Mammary epithelial cell (primary cell): ENCODE measurements at regions of chr19 and their contacts with region 1.

Region 1: GRCh38 chr19:19115954-19116353 is 22.3 kb downstream of the TMEM161A start:
- DNase-seq: no peak
- H3K4me3 ChIP-seq: no peak overlapping the region
- H3K27ac ChIP-seq: no peak overlapping the region
- H3K4me1 ChIP-seq: no peaks in the 10 kb centered on the region
- H3K27me3 ChIP-seq: peaks cover 2% of the 10 kb centered on the region
- CTCF ChIP-seq: peak; percentile 36 to 52

Region 2: DNA sequence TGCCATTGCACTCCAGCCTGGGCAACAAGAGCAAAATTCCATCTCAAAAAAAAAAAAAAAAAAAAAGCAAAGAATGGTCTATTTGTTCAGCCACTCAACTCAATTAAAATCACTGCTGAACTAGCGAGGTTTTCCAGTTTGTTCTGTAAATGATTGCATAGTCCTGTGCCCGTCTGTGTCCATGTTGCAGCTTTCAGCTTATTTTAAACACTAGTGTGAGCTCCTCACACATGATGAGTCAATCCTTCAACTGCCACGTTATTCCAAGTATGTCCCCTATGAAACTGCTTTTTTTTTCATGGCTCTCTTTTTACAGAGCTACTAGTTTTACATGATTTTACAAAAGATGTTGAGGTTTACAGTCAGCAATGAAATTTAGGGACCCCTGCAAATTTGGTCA is 94.8 kb before region 1 on chr19:
- CTCF ChIA-PET with region 1: interaction called, 11 read pairs
- dilution Hi-C with region 1: no loop called
- in situ Hi-C with region 1: no loop called
- intact Hi-C with region 1: no loop called
- DNase-seq: no peak
- H3K4me3 ChIP-seq: no peak overlapping the region
- H3K27ac ChIP-seq: no peak overlapping the region
- H3K4me1 ChIP-seq: peaks cover 9% of the 10 kb centered on the region
- H3K27me3 ChIP-seq: no peaks in the 10 kb centered on the region
- CTCF ChIP-seq: no peak